H1 (cell line): ENCODE measurements at regions of chr1 and their contacts with region 1.

Region 1: DNA sequence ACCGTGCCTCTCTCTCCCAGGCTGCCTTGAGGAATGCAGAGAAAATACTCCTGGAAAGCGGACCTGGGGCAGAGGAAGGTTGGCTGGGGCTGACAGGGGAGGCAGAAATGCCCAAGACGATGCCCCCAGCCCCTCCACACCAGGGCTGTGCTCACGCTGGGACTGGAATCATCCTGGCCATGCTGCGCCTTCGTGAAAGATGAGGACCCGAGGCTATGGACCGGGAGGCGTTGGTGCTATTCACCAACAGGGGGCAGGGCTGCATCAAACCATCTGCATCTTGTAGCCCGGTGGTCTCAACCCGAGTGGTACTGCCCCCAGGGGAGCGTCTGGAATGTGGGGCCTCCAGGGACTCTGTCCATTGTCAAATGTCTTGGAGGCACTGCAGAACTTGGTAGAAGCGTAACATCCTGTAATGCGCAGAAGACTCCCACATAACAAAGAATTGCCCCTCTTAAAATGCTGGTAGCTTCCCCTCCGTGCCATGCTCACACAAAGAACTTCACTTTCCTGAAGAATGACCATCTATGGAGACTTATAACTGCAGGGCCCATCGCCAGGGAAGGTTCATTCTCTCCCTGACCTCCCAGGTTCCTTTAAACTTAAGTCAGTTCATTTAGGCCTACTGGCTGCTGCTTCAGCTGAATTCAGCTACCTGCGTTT is 251.2 kb downstream of the RRAGC start:
- DNase-seq: peak; percentile 49 to 85
- H3K4me3 ChIP-seq: no peak overlapping the region; a peak in 1 of 8 replicates
- H3K27ac ChIP-seq: no peak overlapping the region
- H3K4me1 ChIP-seq: peaks cover 0 to 4% (median 2%) of the 10 kb centered on the region in 4 experiments; a peak in 4 of 7 replicates
- H3K27me3 ChIP-seq: peaks cover 2 to 10% (median 5%) of the 10 kb centered on the region in 4 experiments; a peak in 5 of 7 replicates
- CTCF ChIP-seq: peak; percentile 92 to 95 (median 95)
- EP300 ChIP-seq: no peak
- POLR2A ChIP-seq: no peak
- RAD21 ChIP-seq: peak; percentile 87 to 91

Region 2: GRCh38 chr1:38500352-38500751 is 108.0 kb before region 1 on chr1:
- CTCF ChIA-PET with region 1: no interaction called
- POLR2A ChIA-PET with region 1: no interaction called
- DNase-seq: no peak
- H3K4me3 ChIP-seq: no peak overlapping the region
- H3K27ac ChIP-seq: no peak overlapping the region
- H3K4me1 ChIP-seq: peaks cover 9 to 24% (median 16%) of the 10 kb centered on the region in 4 experiments
- H3K27me3 ChIP-seq: no peaks in the 10 kb centered on the region; a peak in 1 of 7 replicates
- CTCF ChIP-seq: peak; percentile 1 to 54 (median 19); a peak in 3 of 4 replicates
- EP300 ChIP-seq: no peak
- POLR2A ChIP-seq: no peak
- RAD21 ChIP-seq: peak; percentile 37 to 46; a peak in 3 of 4 replicates

Region 3: DNA sequence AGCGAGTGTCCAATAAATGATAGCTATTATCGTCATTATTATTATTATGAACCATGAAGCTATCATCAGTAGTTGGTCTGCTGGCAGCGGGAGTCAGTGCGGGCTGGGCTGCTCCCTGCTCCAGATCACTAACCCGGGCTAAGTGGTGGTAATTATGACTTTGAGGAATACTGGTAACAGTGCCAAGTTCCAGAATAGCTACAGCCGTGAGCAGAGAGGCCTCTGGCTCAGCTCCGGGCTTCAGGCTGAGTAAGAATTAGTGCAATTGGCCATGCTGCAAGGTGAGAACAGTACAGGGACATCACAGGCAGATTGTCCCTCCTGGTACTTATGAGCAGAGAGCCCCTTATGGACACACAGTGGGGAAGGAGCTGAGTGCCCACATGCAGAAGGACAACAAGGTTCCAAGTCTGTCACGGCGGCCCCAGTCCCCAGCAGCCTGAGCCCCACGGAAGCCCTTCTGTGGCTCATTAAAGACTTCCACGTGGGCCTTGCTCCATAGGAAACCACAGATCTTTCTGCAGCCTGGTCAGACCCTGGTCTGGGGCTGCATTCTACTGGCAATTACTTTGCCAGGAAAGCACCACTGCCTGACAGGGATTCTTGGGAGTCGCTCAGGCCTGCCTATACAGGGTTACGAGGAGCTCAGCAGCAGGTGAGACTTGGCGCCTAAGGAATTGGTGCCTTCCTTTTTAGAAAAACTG is 16.2 kb after region 1 on chr1:
- CTCF ChIA-PET with region 1: interaction called, 28 read pairs
- POLR2A ChIA-PET with region 1: no interaction called
- DNase-seq: no peak
- H3K4me3 ChIP-seq: no peak overlapping the region
- H3K27ac ChIP-seq: no peak overlapping the region
- H3K4me1 ChIP-seq: no peaks in the 10 kb centered on the region; a peak in 1 of 7 replicates
- H3K27me3 ChIP-seq: no peaks in the 10 kb centered on the region
- CTCF ChIP-seq: no peak
- EP300 ChIP-seq: no peak
- POLR2A ChIP-seq: no peak
- RAD21 ChIP-seq: no peak

Region 4: GRCh38 chr1:38826262-38826661 is 217.9 kb after region 1 on chr1:
- CTCF ChIA-PET with region 1: interaction called, 24 read pairs
- POLR2A ChIA-PET with region 1: no interaction called
- DNase-seq: no peak
- H3K4me3 ChIP-seq: no peak overlapping the region
- H3K27ac ChIP-seq: no peak overlapping the region
- H3K4me1 ChIP-seq: no peaks in the 10 kb centered on the region
- H3K27me3 ChIP-seq: no peaks in the 10 kb centered on the region; a peak in 1 of 7 replicates
- CTCF ChIP-seq: no peak
- EP300 ChIP-seq: no peak
- POLR2A ChIP-seq: no peak
- RAD21 ChIP-seq: no peak